CD14-positive monocyte (primary cell): ENCODE measurements at regions of chr2 and their contacts with region 1.

Region 1: GRCh38 chr2:44955593-44956392 is 14.3 kb downstream of the SIX3 start:
- DNase-seq: peak; percentile 15 to 42 (median 40)
- H3K4me3 ChIP-seq: no peak overlapping the region
- H3K4me3 Mint-ChIP-seq: peak overlapping the region in 1 of 2 donors; percentile 70
- H3K27ac ChIP-seq: no peak overlapping the region
- H3K27ac Mint-ChIP-seq: no peak overlapping the region
- H3K4me1 ChIP-seq: peaks cover 9 to 22% of the 10 kb centered on the region in 2 donors
- H3K4me1 Mint-ChIP-seq: peaks cover 21% of the 10 kb centered on the region
- H3K27me3 ChIP-seq: peaks cover 39 to 70% of the 10 kb centered on the region in 2 donors
- H3K27me3 Mint-ChIP-seq: peaks cover 72 to 84% (median 74%) of the 10 kb centered on the region in 3 donors
- CTCF ChIP-seq: peak; percentile 86

Region 2: GRCh38 chr2:44044281-44044720 is 911.5 kb before region 1 on chr2:
- intact Hi-C with region 1: loop called in 1 of 2 experiments (anchors 2 kb)
- DNase-seq: peak; percentile 54 to 74 (median 69)
- H3K4me3 ChIP-seq: no peak overlapping the region
- H3K4me3 Mint-ChIP-seq: no peak overlapping the region
- H3K27ac ChIP-seq: no peak overlapping the region
- H3K27ac Mint-ChIP-seq: no peak overlapping the region
- H3K4me1 ChIP-seq: no peaks in the 10 kb centered on the region
- H3K4me1 Mint-ChIP-seq: peaks cover 2% of the 10 kb centered on the region
- H3K27me3 ChIP-seq: no peaks in the 10 kb centered on the region
- H3K27me3 Mint-ChIP-seq: peaks cover 7 to 11% (median 9%) of the 10 kb centered on the region in 3 donors
- CTCF ChIP-seq: peak; percentile 83

Region 3: DNA sequence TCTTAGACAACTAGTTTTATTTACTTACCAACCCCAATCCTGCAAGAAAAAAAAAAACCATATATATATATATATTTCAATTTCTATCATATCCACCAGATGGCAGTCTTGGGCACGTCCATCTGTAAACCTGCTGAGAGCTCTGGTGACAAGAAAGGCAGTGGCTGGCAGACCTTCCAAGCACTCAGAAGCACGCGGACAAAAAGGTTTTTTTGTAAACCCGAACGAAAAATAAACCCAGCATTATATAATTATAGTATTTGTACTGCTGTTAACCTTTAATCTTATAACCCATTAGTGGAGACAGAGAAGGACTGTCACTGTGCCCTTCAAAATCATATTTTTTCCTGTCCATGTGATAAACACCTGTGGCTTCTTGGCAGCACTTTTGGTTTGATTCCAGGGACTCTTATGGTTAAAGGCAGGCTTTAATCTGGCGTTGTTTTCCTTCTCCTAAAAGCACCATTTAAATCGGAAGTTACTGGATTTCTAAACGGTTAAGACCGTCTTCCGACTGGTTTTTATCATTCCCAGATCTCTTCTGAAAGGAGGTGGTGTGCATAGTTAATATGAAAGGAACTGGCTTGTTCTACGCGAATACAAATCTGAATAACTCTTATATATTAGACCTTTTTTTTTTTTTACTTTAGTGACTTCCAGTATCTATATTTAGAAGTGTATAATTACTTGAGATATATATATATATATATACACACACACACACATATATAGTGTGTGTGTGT is 711.5 kb before region 1 on chr2:
- intact Hi-C with region 1: loop called in 1 of 2 experiments (anchors 10 kb)
- DNase-seq: peak; percentile 43 to 64 (median 55)
- H3K4me3 ChIP-seq: no peak overlapping the region
- H3K4me3 Mint-ChIP-seq: peak overlapping the region; percentile 46 to 49
- H3K27ac ChIP-seq: no peak overlapping the region
- H3K27ac Mint-ChIP-seq: no peak overlapping the region
- H3K4me1 ChIP-seq: peaks cover 5 to 7% of the 10 kb centered on the region in 2 donors
- H3K4me1 Mint-ChIP-seq: peaks cover 22% of the 10 kb centered on the region
- H3K27me3 ChIP-seq: no peaks in the 10 kb centered on the region
- H3K27me3 Mint-ChIP-seq: peaks cover 0 to 4% (median 0%) of the 10 kb centered on the region in 3 donors
- CTCF ChIP-seq: peak; percentile 80

Region 4: GRCh38 chr2:44392338-44392943 is 563.4 kb before region 1 on chr2:
- intact Hi-C with region 1: loop called (anchors 5 to 10 kb)
- DNase-seq: peak; percentile 8 to 26 (median 15)
- H3K4me3 ChIP-seq: no peak overlapping the region
- H3K4me3 Mint-ChIP-seq: no peak overlapping the region
- H3K27ac ChIP-seq: no peak overlapping the region
- H3K27ac Mint-ChIP-seq: no peak overlapping the region
- H3K4me1 ChIP-seq: no peaks in the 10 kb centered on the region
- H3K4me1 Mint-ChIP-seq: no peaks in the 10 kb centered on the region
- H3K27me3 ChIP-seq: no peaks in the 10 kb centered on the region
- H3K27me3 Mint-ChIP-seq: peaks cover 0 to 2% (median 2%) of the 10 kb centered on the region in 3 donors
- CTCF ChIP-seq: peak; percentile 81

Region 5: GRCh38 chr2:44479122-44479887 is 476.5 kb before region 1 on chr2:
- intact Hi-C with region 1: loop called (anchors 5 kb)
- DNase-seq: peak; percentile 44 to 69 (median 64)
- H3K4me3 ChIP-seq: no peak overlapping the region
- H3K4me3 Mint-ChIP-seq: no peak overlapping the region
- H3K27ac ChIP-seq: no peak overlapping the region
- H3K27ac Mint-ChIP-seq: no peak overlapping the region
- H3K4me1 ChIP-seq: no peaks in the 10 kb centered on the region
- H3K4me1 Mint-ChIP-seq: no peaks in the 10 kb centered on the region
- H3K27me3 ChIP-seq: no peaks in the 10 kb centered on the region
- H3K27me3 Mint-ChIP-seq: no peaks in the 10 kb centered on the region
- CTCF ChIP-seq: peak; percentile 98

Region 6: GRCh38 chr2:44886414-44886813 is 69.4 kb before region 1 on chr2:
- intact Hi-C with region 1: no loop called
- DNase-seq: no peak
- H3K4me3 ChIP-seq: no peak overlapping the region
- H3K4me3 Mint-ChIP-seq: no peak overlapping the region
- H3K27ac ChIP-seq: no peak overlapping the region
- H3K27ac Mint-ChIP-seq: no peak overlapping the region
- H3K4me1 ChIP-seq: no peaks in the 10 kb centered on the region
- H3K4me1 Mint-ChIP-seq: no peaks in the 10 kb centered on the region
- H3K27me3 ChIP-seq: peaks cover 4 to 18% of the 10 kb centered on the region in 2 donors
- H3K27me3 Mint-ChIP-seq: peaks cover 3 to 18% (median 9%) of the 10 kb centered on the region in 3 donors
- CTCF ChIP-seq: no peak